Calu3 (cell line): ENCODE measurements at regions of chr3 and their contacts with region 1.

Region 1: GRCh38 chr3:18424729-18425640 is at the start of gene SATB1:
- DNase-seq: peak; percentile 78
- H3K4me3 Mint-ChIP-seq: peak within 1 kb of the TSS; percentile 95
- H3K27ac Mint-ChIP-seq: peak within 1 kb of the TSS; percentile 90
- H3K4me1 Mint-ChIP-seq: peaks cover 6% of the 10 kb centered on the region
- H3K27me3 Mint-ChIP-seq: no peaks in the 10 kb centered on the region
- CTCF ChIP-seq: no peak
- total RNA-seq, gene SATB1: 16.6 and 16.8 TPM in 2 replicates

Region 2: DNA sequence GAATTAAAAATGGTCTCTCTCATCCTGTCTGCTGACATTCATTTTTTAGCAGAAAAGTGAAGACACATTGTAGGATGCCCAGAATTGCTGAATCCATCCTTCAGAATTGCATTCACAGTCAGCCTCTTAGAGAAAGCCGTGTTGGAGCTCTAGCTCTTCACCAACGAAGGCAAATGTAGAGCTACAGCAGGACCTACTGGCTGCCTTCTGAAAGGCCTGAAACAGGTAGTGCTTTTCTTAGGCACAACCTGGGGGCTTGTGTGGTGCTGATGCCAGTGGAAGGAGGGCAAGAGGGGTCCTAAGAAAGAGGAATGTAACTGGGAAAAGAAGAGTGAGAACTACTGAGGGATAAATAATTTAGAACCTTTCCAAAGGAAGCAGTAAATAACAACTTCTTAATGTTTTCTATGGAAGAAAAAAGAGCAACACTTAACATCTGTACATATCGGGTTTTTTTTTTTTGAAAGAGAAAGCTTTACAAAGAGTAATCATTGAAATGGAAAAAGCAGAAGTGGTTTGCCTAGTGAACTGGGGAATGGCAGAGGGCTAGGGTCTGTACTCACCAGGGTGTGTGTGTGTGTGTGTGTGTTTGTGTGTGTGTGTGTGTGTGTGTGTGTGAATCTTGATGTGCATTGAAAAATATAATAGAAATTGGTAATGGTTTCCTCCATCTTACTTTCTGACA is 297.7 kb before region 1 on chr3:
- CTCF ChIA-PET with region 1: no interaction called
- intact Hi-C with region 1: no loop called
- DNase-seq: no peak
- H3K4me3 Mint-ChIP-seq: no peak overlapping the region
- H3K27ac Mint-ChIP-seq: no peak overlapping the region
- H3K4me1 Mint-ChIP-seq: peaks cover 16% of the 10 kb centered on the region
- H3K27me3 Mint-ChIP-seq: no peaks in the 10 kb centered on the region
- CTCF ChIP-seq: no peak

Region 3: DNA sequence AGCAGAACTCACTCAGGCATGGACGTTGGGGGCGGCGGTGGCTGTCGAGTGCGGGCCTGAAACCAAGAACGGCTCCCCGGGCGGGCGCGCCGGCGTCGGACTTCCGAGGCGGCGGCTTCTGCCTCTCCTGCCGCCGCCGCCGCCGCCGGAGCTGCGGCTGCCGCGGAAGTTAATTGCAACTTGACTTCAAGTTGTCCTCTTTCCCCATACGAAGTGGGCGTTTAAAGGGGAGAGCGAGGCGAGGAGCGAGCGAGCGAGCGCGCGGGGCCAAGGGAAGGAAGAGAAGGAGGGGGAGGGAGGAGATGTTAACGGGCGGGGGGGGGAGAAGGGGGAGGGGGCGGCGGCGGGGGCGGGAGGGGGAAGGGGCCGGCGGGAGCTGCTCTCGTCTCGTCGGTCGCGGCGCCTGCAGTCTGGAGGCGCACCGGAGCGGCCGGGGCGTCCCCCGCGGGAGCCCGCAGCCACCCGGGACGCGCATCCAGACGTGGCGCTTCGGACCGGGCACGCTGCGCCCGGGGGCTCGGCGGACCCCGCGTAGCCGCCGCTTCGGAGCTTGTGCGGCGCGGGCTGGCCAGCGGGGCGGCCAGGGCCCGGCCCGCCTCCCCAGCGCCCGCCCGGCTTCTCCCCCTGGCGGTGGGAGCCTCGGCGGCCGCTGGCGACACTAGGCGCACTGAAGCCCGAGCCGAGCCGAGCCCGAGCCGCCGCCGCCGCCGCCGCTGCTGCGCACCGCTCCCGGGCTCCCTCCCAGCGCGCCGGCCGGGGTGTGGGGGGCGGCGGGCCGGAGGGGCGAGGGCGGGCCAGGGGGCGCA is 19.8 kb after region 1 on chr3:
- CTCF ChIA-PET with region 1: interaction called, 3 read pairs
- intact Hi-C with region 1: loop called (anchors 2 kb)
- DNase-seq: peak; percentile 83
- H3K4me3 Mint-ChIP-seq: peak overlapping the region; percentile 91
- H3K27ac Mint-ChIP-seq: peak overlapping the region; percentile 81
- H3K4me1 Mint-ChIP-seq: no peaks in the 10 kb centered on the region
- H3K27me3 Mint-ChIP-seq: peaks cover 21% of the 10 kb centered on the region
- CTCF ChIP-seq: no peak